Endothelial cell of umbilical vein (primary cell): ENCODE measurements at regions of chr13 and their contacts with region 1.

Region 1: DNA sequence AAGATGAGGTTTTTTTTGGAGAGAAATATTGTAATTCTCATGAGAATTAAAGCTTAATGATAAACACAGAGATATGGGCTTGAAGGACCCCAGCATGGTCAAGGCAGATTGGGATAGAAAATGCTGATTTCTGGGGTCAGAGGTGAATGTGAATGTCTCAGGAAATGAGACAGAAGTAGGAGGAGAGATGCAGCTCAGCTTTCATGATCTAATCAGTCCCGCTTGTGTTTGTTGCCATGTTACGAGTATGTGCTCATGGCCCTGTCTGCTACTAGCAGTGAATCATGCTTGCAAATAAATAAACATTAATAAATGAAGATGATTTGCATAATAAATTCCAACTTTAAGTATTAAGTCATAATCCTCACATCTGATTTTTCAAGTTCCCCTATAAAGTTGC is 23.0 kb upstream of the NDFIP2 start:
- DNase-seq: peak; percentile 79
- H3K4me3 ChIP-seq: no peak overlapping the region
- H3K27ac ChIP-seq: peak overlapping the region; percentile 5
- H3K4me1 ChIP-seq: peaks cover 9% of the 10 kb centered on the region
- H3K27me3 ChIP-seq: no peaks in the 10 kb centered on the region
- CTCF ChIP-seq: no peak
- POLR2A ChIP-seq: no peak

Region 2: GRCh38 chr13:78742659-78743058 is 715.3 kb before region 1 on chr13:
- CTCF ChIA-PET with region 1: no interaction called
- POLR2A ChIA-PET with region 1: no interaction called
- dilution Hi-C with region 1: no loop called
- intact Hi-C with region 1: no loop called
- DNase-seq: no peak
- H3K4me3 ChIP-seq: no peak overlapping the region
- H3K27ac ChIP-seq: no peak overlapping the region
- H3K4me1 ChIP-seq: no peaks in the 10 kb centered on the region
- H3K27me3 ChIP-seq: peaks cover 0 to 8% of the 10 kb centered on the region in 2 experiments
- CTCF ChIP-seq: no peak
- POLR2A ChIP-seq: no peak

Region 3: GRCh38 chr13:79522583-79522982 is 64.6 kb after region 1 on chr13:
- CTCF ChIA-PET with region 1: no interaction called
- POLR2A ChIA-PET with region 1: no interaction called
- dilution Hi-C with region 1: no loop called
- intact Hi-C with region 1: loop called (anchors 1 kb)
- DNase-seq: peak; percentile 44
- H3K4me3 ChIP-seq: no peak overlapping the region
- H3K27ac ChIP-seq: no peak overlapping the region
- H3K4me1 ChIP-seq: peaks cover 27% of the 10 kb centered on the region
- H3K27me3 ChIP-seq: no peaks in the 10 kb centered on the region
- CTCF ChIP-seq: no peak
- POLR2A ChIP-seq: no peak

Region 4: DNA sequence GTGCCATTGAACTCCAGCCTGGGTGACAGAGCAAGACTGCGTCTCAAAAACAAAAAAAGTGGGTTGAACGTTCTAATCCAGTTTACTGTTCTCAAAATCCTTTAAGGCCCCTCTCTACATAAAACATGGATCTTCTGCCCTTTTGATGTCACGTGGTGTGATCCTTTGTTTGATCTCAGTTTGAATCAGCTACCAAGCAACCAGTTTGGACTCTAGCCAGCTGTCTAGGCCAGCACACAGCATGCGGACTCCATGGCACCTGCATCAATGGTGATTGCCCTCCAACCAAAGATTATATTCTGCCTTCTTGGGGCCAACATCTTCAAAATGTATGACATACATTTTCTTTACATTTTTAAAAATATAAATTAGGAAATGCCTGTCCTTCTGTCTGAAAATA is 388.4 kb after region 1 on chr13:
- CTCF ChIA-PET with region 1: no interaction called
- POLR2A ChIA-PET with region 1: no interaction called
- dilution Hi-C with region 1: no loop called
- intact Hi-C with region 1: no loop called
- DNase-seq: no peak
- H3K4me3 ChIP-seq: no peak overlapping the region
- H3K27ac ChIP-seq: no peak overlapping the region
- H3K4me1 ChIP-seq: no peaks in the 10 kb centered on the region
- H3K27me3 ChIP-seq: no peaks in the 10 kb centered on the region
- CTCF ChIP-seq: no peak
- POLR2A ChIP-seq: no peak